A673 (cell line): ENCODE measurements at regions of chr4 and their contacts with region 1.

Region 1: DNA sequence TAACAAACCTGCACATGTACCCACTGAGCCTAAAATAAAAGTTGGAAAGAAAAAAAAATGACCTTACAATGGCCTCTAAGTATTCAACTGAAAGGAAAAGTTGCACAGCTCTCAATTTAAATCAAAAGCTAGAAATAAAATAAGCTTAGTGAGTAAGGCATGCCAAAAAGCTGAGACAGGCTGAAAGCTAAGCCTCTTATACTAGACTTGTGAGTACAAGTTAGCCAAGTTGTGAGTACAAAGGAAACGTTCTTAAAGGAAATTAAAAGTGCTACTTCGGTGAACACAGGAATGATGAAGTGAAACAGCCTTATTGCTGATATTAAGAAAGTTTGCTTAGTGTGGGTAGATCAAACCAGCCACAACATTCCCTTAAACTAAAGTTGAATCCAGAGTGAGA is 707.9 kb upstream of the PITX2 start:
- DNase-seq: no peak
- H3K4me3 ChIP-seq: no peak overlapping the region
- H3K27ac ChIP-seq: no peak overlapping the region
- H3K4me1 ChIP-seq: no peaks in the 10 kb centered on the region
- H3K27me3 ChIP-seq: no peaks in the 10 kb centered on the region
- CTCF ChIP-seq: no peak

Region 2: DNA sequence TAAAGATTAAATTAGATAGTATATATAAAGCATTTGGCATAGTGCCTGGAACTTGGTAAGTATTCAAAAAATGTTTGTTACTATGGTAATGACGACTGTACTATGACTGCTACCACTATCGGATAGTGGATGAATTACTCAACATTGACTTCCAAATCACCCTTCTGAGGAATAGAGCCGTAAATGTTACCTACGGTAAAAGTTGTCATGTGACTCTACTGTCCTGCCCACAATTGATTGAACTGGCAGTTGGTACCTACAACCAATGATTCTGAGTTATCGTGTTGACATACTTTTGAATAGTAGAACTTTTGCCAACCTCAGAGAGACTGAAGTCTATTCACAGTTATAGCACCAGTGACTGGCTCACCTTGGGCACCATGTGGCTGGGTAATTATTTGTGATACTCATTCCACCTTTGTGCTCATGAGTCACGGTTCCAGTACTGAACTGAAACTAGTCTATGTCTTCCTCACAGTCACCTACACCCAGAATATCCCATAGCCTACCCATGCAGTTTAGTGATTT is 522.4 kb before region 1 on chr4:
- CTCF ChIA-PET with region 1: no interaction called
- POLR2A ChIA-PET with region 1: no interaction called
- intact Hi-C with region 1: no loop called
- DNase-seq: peak; percentile 41
- H3K4me3 ChIP-seq: no peak overlapping the region
- H3K27ac ChIP-seq: no peak overlapping the region
- H3K4me1 ChIP-seq: no peaks in the 10 kb centered on the region
- H3K27me3 ChIP-seq: no peaks in the 10 kb centered on the region
- CTCF ChIP-seq: no peak

Region 3: DNA sequence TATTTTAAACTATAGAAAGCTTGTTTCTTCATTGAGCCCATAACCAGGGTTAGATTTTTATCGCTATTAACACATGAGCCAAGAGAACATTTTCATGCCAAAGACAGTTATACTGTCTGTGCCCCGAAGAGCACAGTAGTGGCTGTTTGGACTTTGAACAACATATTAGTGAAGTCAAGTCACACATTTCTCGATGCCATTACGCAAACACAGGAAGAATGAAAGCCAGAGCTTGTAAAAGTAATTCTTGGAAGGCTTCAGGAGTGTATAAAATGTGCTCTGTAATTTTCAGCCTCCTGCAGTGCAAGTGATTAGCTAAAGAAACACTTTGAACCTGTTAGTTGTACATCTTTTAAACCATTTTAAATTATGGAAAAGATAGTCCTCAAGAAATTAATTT is 117.3 kb before region 1 on chr4:
- CTCF ChIA-PET with region 1: no interaction called
- POLR2A ChIA-PET with region 1: no interaction called
- intact Hi-C with region 1: no loop called
- DNase-seq: no peak
- H3K4me3 ChIP-seq: no peak overlapping the region
- H3K27ac ChIP-seq: no peak overlapping the region
- H3K4me1 ChIP-seq: no peaks in the 10 kb centered on the region
- H3K27me3 ChIP-seq: no peaks in the 10 kb centered on the region
- CTCF ChIP-seq: no peak

Region 4: GRCh38 chr4:111662496-111662895 is 331.7 kb after region 1 on chr4:
- CTCF ChIA-PET with region 1: no interaction called
- POLR2A ChIA-PET with region 1: no interaction called
- intact Hi-C with region 1: no loop called
- DNase-seq: no peak
- H3K4me3 ChIP-seq: no peak overlapping the region
- H3K27ac ChIP-seq: no peak overlapping the region
- H3K4me1 ChIP-seq: no peaks in the 10 kb centered on the region
- H3K27me3 ChIP-seq: no peaks in the 10 kb centered on the region
- CTCF ChIP-seq: no peak

Region 5: DNA sequence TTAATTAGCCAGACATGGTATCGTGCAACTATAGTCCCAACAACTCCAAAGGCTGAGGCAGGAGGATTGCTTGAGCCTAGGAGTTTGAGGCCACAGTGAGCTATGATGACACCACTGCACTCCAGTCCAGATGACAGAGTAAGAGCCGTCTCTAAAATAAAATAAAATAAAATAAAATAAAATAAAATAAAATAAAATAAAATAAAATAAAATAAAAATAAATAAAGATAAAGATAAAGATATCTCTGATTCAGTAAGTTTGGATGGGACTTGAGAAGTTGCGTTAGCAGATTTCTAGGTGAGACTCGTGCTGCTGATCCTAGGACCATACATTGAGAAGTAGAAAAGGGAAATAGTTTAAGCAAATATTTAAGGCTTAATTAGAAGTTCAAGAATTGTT is 559.6 kb after region 1 on chr4:
- CTCF ChIA-PET with region 1: no interaction called
- POLR2A ChIA-PET with region 1: no interaction called
- intact Hi-C with region 1: loop called (anchors 5 kb)
- DNase-seq: no peak
- H3K4me3 ChIP-seq: no peak overlapping the region
- H3K27ac ChIP-seq: no peak overlapping the region
- H3K4me1 ChIP-seq: no peaks in the 10 kb centered on the region
- H3K27me3 ChIP-seq: no peaks in the 10 kb centered on the region
- CTCF ChIP-seq: no peak